Posterior vena cava (tissue), 2 donors: ENCODE measurements at regions of chr2 and their contacts with region 1.

Region 1: GRCh38 chr2:127305990-127306585 is 12.1 kb upstream of the ERCC3 start:
- DNase-seq: no peak

Region 2: GRCh38 chr2:127351603-127352002 is 45.5 kb after region 1 on chr2:
- intact Hi-C with region 1: loop called in 1 of 2 experiments (anchors 2 kb)
- DNase-seq: no peak